Dendritic cell treated with granulocyte-macrophage colony-stimulating factor and Interleukin-4, amounts not matched to agents 40 ng/mL and 50 ng/mL, for 4 days (primary cell): ENCODE measurements at regions of chr1 and their contacts with region 1.

Region 1: DNA sequence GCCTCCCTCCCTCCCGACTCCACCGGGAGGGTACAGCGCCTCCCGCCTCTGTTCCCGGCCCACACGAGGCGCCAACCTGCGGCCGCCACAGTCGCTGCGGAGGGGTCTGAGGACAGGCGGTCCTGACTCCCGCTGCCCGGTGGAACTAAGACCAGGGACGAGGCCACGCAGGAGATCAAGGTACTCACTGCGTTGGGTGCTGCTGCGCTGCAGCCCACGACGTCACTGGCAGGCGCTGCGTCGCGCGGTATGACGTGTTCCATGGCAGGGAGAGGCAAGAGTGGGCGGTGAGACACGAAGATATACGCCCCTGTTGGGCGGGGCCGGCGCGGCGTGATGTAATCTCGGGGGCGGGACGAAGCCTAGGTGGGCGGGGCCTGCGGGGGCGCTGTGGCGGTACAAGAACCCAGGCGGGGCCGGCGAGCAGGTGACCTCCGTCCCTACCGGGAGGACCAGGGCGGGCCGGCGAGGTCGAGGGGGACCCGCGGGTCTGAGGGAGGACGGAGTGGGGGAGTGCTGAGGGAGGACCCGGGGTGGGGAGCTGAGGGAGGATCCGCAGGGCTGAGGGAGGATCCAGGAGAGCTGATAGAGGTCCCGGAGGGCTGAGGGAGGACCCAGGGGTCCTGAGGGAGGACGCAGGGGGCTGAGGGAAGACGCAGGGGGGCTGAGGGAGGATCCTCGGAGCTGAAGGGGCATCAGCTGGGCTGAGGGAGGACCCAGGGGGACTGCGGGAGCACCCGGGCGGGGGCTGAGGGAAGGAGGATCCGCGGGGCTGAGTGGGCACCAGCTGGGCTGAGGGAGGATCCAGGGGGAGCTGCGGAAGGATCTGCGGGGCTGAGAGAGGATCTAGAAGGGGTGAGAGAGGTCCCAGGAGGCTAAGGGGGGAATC is at the start of gene MRPL55:
- H3K4me3 Mint-ChIP-seq: peak within 1 kb of the TSS; percentile 92
- H3K27ac Mint-ChIP-seq: peak within 1 kb of the TSS; percentile 90
- H3K4me1 Mint-ChIP-seq: peaks cover 52% of the 10 kb centered on the region
- H3K27me3 Mint-ChIP-seq: no peaks in the 10 kb centered on the region

Region 2: DNA sequence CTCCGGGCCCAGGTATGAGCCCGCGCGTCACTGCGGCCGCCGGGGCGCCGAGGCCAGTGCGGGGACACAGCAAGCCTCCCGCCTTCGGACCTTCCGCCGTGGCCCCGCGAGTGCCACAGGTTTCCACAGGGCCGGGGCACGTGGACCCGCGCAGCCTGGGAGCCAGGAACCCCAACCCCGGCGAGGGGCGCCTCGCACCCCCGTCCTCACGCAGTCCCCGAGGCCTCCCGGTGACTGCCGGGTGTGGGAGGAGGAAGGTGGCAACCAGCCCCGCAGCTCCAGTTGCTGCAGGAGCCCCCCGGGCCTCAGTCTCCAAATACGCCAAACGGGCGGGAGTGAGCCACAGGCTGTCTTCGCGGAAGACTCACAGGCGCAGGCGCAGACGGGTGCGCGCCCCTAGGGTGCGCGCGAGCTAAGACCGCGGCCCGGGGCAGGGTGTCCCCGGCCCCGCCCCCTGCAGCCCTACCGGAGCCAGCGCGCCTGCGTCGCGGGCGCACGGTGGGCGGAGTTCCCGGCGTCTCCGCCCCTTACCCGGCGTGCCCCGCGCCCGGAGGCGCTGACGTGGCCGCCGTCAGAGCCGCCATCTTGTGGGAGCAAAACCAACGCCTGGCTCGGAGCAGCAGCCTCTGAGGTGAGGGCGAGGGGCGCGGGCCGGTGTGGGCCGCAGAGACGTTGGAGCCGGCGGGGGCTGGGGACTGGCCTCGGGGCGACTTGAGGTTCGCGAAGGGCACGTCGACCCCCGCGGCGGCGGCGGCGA is 27.0 kb before region 1 on chr1 and contains the start of gene ARF1:
- intact Hi-C with region 1: loop called (anchors 2 kb)
- H3K4me3 Mint-ChIP-seq: peak within 1 kb of the TSS; percentile 92
- H3K27ac Mint-ChIP-seq: peak within 1 kb of the TSS; percentile 96
- H3K4me1 Mint-ChIP-seq: peaks cover 61% of the 10 kb centered on the region
- H3K27me3 Mint-ChIP-seq: peaks cover 2% of the 10 kb centered on the region

Region 3: GRCh38 chr1:228139944-228140656 is 30.8 kb after region 1 on chr1 and contains the start of gene GUK1:
- intact Hi-C with region 1: loop called (anchors 1 kb)
- H3K4me3 Mint-ChIP-seq: peak within 1 kb of the TSS; percentile 82
- H3K27ac Mint-ChIP-seq: peak within 1 kb of the TSS; percentile 87
- H3K4me1 Mint-ChIP-seq: peaks cover 41% of the 10 kb centered on the region
- H3K27me3 Mint-ChIP-seq: no peaks in the 10 kb centered on the region

Region 4: GRCh38 chr1:228165372-228166169 is 56.3 kb after region 1 on chr1 and contains the start of gene IBA57:
- intact Hi-C with region 1: loop called (anchors 1 kb)
- H3K4me3 Mint-ChIP-seq: peak within 1 kb of the TSS; percentile 83
- H3K27ac Mint-ChIP-seq: peak within 1 kb of the TSS; percentile 91
- H3K4me1 Mint-ChIP-seq: peaks cover 71% of the 10 kb centered on the region
- H3K27me3 Mint-ChIP-seq: peaks cover 21% of the 10 kb centered on the region

Region 5: DNA sequence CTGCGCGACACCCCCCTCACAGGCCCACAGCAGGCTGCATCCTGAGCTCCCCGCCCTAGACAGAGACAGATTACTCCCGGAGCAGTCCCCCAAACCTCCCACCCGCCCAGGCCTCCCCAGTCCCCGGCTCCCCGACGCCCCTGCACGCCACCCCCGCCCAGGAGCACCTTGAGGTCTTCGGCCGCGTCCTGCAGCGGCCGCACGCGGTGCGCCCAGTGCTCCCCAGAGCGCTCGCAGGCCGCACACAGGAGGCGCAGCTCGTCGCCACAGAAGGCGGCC is 296.6 kb after region 1 on chr1:
- intact Hi-C with region 1: loop called (anchors 10 kb)
- H3K4me3 Mint-ChIP-seq: peak overlapping the region; percentile 96
- H3K27ac Mint-ChIP-seq: peak overlapping the region; percentile 92
- H3K4me1 Mint-ChIP-seq: peaks cover 70% of the 10 kb centered on the region
- H3K27me3 Mint-ChIP-seq: no peaks in the 10 kb centered on the region

Region 6: GRCh38 chr1:228986093-228986904 is 877.0 kb after region 1 on chr1:
- intact Hi-C with region 1: no loop called
- H3K4me3 Mint-ChIP-seq: no peak overlapping the region
- H3K27ac Mint-ChIP-seq: peak overlapping the region; percentile 40
- H3K4me1 Mint-ChIP-seq: peaks cover 85% of the 10 kb centered on the region
- H3K27me3 Mint-ChIP-seq: no peaks in the 10 kb centered on the region